Activated CD8-positive, alpha-beta memory T cell treated with anti-CD3 and anti-CD28 coated beads, Interleukin-2, amount 10 ng/mL, durations not matched to agents 7 days and 5 days (primary cell): ENCODE measurements at regions of chr15 and their contacts with region 1.

Region 1: DNA sequence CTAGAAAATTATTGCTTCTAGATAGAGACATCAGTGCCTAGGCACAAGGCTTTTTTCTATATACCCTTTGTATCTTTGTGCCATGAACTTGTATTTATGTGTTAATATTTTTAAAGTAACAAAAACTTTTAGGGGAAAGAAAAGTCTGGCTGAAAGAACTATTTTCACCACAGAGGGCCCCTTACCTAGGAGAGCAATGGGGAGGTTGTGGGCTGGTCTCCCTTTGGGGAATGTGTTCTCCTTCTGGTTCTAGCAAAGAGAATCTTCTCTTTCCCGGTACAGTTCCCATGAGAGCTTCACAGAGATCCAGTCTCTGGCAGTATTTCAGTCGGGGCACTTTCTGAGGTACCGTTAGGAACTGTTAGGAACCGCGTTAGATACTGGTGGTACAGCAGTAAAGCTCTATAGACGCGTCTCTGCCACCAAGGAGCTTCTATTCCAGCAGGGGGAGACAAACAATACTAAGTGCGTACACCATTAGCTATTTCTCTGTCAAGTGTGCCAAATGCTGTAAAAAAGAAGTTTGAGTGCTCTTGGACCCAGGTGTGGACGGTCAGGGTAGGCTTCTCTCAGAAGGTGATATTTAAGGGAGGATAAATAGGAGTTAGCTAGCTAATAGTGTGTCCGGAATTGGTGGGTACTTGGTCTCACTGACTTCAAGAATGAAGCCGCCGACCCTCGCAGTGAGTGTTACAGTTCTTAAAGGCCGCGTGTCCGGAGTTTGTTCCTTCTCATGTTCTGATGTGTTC is 4.6 kb upstream of the EPB42 start:
- DNase-seq: peak; percentile 69
- ATAC-seq: peak; percentile 95
- H3K4me3 Mint-ChIP-seq: no peak overlapping the region
- H3K27ac Mint-ChIP-seq: no peak overlapping the region
- H3K4me1 Mint-ChIP-seq: peaks cover 5% of the 10 kb centered on the region
- H3K27me3 Mint-ChIP-seq: peaks cover 24% of the 10 kb centered on the region

Region 2: DNA sequence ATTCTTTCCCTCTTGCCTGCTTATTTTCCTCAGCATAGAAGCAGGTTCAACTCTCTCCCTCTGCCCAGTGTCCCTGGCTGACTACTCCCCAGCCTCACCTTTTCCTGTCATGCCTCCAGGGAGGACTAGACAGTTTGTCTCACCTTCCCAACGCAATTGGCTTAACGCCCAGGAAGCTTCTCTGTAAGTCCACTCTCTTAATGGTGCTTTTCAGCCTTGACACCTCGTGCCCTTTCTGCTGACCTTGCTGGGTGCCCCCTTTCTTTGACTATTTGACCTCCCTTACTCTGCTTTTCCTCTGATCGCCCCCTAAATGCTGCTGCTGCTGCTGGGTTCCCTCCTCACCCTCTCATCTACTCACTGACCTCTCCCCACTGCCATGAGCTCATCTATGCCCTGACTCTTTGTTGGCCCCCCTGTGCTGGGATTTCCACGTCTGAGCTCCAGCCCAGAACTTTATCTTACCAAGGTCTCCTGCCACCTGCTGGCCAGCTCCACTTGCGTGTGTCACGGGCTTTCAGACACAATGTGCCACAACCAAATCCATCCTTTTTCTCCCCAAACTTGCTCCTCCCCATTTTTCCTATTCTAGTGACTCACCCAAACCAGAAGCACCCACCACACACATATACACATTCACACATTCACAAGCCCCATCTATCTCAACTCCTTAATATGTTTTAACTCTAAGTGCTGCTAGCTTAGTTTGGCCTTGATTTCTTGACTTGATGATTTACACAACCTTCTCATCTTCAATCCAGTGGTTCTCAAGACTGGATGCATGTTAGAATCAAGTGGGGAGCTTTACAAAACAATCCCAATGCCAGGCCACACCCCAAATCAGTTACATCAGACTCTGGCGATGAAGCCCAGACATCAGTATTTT is 21.1 kb before region 1 on chr15:
- CTCF ChIA-PET with region 1: interaction called, 15 read pairs
- DNase-seq: peak; percentile 72
- ATAC-seq: peak; percentile 73
- H3K4me3 Mint-ChIP-seq: no peak overlapping the region
- H3K27ac Mint-ChIP-seq: no peak overlapping the region
- H3K4me1 Mint-ChIP-seq: peaks cover 17% of the 10 kb centered on the region
- H3K27me3 Mint-ChIP-seq: peaks cover 13% of the 10 kb centered on the region

Region 3: DNA sequence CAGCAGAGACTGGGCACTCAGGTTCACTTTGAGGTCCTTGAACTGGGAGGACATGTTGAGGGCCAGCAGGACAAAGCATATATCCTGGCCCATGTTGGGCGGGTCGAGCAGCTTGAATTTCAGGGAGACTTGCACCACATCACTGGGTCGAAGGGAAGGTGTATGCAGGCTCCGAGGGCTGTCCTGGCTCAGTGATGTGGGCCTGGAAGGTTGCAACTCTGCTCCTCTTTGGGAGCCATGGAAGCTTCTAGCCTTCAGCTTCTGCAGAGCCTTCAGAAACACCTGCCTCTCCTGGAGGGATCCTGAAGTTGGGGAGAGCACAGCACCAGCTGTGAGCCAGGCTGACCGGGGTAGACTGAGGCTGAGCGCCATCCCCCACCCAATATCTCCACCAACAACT is 10.2 kb after region 1 on chr15:
- CTCF ChIA-PET with region 1: interaction called, 37 read pairs
- DNase-seq: no peak
- ATAC-seq: no peak
- H3K4me3 Mint-ChIP-seq: no peak overlapping the region
- H3K27ac Mint-ChIP-seq: no peak overlapping the region
- H3K4me1 Mint-ChIP-seq: peaks cover 32% of the 10 kb centered on the region
- H3K27me3 Mint-ChIP-seq: no peaks in the 10 kb centered on the region

Region 4: GRCh38 chr15:43246261-43246774 is 20.9 kb after region 1 on chr15:
- CTCF ChIA-PET with region 1: interaction called, 37 read pairs
- DNase-seq: no peak
- ATAC-seq: no peak
- H3K4me3 Mint-ChIP-seq: no peak overlapping the region
- H3K27ac Mint-ChIP-seq: no peak overlapping the region
- H3K4me1 Mint-ChIP-seq: peaks cover 27% of the 10 kb centered on the region
- H3K27me3 Mint-ChIP-seq: peaks cover 9% of the 10 kb centered on the region

Region 5: GRCh38 chr15:43275740-43276562 is 50.6 kb after region 1 on chr15:
- CTCF ChIA-PET with region 1: interaction called, 11 read pairs
- DNase-seq: no peak
- ATAC-seq: no peak
- H3K4me3 Mint-ChIP-seq: no peak overlapping the region
- H3K27ac Mint-ChIP-seq: no peak overlapping the region
- H3K4me1 Mint-ChIP-seq: peaks cover 6% of the 10 kb centered on the region
- H3K27me3 Mint-ChIP-seq: peaks cover 13% of the 10 kb centered on the region